Prostate gland (tissue), 2 donors: ENCODE measurements at regions of chr15 and their contacts with region 1.

Region 1: DNA sequence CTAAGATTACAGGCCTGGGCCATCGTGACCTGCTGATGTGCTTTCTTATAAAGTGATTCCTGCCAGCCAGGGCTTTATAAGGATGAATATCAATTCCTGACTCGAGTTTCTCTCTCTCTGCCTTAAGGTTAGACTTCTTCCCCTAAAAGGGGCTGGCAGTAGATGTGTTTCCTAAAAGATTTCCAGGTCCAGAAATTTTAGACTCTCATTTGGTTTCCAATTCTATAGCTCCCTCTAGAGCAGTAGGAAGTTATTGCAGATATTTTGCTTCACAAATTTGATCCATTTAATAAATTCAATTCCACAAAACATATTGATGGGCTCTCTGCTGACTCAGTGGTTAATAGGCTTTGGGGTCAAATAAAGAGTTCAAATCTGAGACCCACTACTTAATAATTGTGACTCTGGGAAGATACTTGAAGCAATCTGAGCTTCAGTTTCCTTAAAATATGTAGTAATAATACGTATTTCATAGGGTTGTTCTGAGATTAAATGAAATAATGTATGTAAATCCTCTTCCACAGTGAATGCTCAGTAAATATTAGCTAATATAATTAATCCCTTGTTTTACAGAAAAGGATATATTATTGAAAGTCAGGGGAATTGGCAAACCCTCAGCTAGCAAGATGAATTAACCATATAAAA is 2.1 kb downstream of the TRIM69 start:
- DNase-seq: no peak
- H3K4me3 ChIP-seq: no peak overlapping the region
- H3K27ac ChIP-seq: no peak overlapping the region
- H3K4me1 ChIP-seq: no peaks in the 10 kb centered on the region
- H3K27me3 ChIP-seq: no peaks in the 10 kb centered on the region
- CTCF ChIP-seq: peak; percentile 18 to 81 (median 63)
- POLR2A ChIP-seq: no peak

Region 2: GRCh38 chr15:44584162-44584749 is 154.2 kb before region 1 on chr15:
- intact Hi-C with region 1: loop called (anchors 10 kb)
- DNase-seq: no peak
- H3K4me3 ChIP-seq: no peak overlapping the region
- H3K27ac ChIP-seq: no peak overlapping the region
- H3K4me1 ChIP-seq: no peaks in the 10 kb centered on the region
- H3K27me3 ChIP-seq: no peaks in the 10 kb centered on the region
- CTCF ChIP-seq: peak in 2 of 4 experiments; percentile 23 to 39
- POLR2A ChIP-seq: no peak

Region 3: DNA sequence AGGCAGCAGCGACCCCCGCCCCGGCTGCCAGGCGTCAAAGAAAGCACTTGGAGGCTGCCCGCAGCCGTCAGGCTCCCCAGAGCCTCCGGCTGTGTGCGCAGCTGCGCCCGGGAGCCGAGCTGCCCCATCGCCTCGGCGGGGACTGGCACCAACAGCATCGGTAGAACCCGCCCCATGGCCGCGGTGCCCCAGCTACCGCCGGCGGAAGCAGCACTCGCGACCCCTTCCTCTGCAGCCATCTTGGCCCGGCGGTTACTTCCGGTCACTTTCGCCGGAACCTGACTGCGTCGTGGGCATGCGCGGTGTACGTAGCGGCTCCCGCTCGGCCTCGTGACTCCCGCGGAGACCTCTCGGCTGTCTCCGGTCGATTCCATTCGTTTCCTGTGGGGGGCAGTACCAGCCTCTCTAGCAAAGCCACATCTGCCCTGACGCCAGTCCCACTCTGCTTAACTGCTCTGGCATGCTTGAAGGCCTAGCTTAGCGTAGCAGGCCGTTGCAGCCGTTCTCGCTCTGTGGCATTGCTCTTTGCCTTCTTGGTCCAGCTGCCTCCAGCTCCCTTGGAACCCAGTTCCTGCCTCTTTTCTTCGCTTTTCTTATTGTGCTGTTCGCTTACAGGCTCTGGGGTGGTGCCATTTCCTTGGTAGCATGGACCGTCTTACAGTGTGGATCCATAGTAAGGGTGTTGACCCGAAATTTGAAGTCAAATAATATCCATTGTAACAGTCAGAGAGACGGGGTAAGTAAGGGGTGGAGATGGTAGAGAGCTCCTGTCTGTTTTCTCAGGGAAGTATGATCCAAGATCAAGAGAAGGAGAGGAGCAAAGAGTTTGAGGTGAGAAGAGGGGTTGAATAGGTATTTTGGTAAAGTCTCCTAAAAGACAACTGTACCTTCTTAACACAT is 74.8 kb before region 1 on chr15 and contains the start of gene SPG11:
- intact Hi-C with region 1: loop called (anchors 2 kb)
- DNase-seq: peak; percentile 96
- H3K4me3 ChIP-seq: peak within 1 kb of the TSS; percentile 91 to 98
- H3K27ac ChIP-seq: peak within 1 kb of the TSS; percentile 92 to 96
- H3K4me1 ChIP-seq: no peaks in the 10 kb centered on the region
- H3K27me3 ChIP-seq: no peaks in the 10 kb centered on the region
- CTCF ChIP-seq: peak; percentile 87 to 99 (median 97)
- POLR2A ChIP-seq: peak; percentile 81
- total RNA-seq, gene SPG11: 86.2 to 93.7 TPM